A549 (cell line): ENCODE measurements at regions of chr20 and their contacts with region 1.

Region 1: DNA sequence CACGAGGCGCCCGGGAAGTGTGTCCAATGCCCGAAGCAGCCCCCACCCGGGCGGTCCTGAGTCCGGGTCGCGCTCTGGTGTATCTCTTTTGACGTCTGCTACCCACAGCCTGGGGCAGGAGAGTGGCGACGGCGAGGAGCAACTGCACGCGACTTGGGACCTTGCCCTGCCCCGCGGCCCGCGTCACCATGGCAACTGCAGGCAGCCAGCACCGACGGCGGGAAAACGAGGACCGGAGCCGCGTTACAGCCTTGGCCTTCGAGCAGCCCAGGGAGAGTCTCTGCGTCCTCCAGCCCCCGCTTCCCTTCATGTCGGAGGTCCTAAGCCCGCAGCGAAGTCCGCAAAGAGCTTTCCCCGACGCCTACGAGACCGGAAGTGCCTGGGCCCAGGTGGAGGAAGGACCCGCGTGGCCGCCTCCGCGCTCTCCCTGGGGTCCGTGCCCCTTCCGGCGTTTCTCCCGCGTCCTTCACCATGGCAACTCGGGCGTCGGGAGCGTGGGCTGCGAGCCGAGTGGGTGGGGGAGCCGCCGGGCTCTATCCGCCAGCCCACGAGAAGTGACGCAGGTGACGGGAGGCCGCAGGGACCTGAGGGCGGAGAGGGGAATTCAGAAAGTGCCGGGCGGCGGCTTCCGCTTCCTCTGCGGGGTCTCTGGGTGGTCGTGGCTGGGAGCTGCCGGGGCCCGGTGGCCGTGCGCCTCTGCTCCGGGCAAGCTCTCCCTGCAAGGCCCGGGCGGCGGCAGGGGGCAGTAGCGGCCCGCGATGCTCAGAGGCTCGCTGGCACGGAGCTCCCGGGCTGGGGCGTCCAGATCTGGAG is 88.6 kb upstream of the TGM3 start:
- DNase-seq: peak; percentile 73 to 90
- ATAC-seq: peak; percentile 96 to 99
- H3K4me3 ChIP-seq: peak overlapping the region; percentile 57
- H3K27ac ChIP-seq: peak overlapping the region; percentile 63 to 85
- H3K4me1 ChIP-seq: no peaks in the 10 kb centered on the region
- CTCF ChIP-seq: peak; percentile 86
- EP300 ChIP-seq: no peak
- POLR2A ChIP-seq: no peak
- RAD21 ChIP-seq: peak; percentile 83 to 95

Region 2: GRCh38 chr20:2221921-2222320 is 14.8 kb after region 1 on chr20:
- CTCF ChIA-PET with region 1: interaction called, 11 read pairs
- POLR2A ChIA-PET with region 1: no interaction called
- DNase-seq: no peak
- ATAC-seq: no peak
- H3K4me3 ChIP-seq: no peak overlapping the region
- H3K27ac ChIP-seq: no peak overlapping the region
- H3K4me1 ChIP-seq: no peaks in the 10 kb centered on the region
- CTCF ChIP-seq: no peak
- EP300 ChIP-seq: no peak
- POLR2A ChIP-seq: no peak
- RAD21 ChIP-seq: no peak

Region 3: DNA sequence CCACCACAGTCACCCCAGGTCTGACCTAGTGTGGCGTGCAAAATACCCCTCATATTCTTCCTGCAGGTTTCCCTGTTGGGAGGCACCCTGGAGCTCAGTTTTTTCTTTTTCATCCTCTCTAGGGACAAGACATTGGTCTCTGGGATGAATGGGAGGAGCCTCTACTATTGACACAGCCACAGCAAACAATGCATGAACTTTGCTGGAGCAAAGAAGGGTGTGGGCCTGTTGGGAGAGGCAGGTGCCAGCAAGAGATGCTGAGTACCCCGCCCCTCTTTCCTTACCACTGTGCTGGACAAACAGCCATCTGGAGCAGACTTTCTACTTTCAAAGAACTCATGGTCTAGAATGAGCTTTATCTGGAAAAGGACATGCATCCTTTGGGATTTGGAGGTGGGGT is 98.8 kb after region 1 on chr20:
- CTCF ChIA-PET with region 1: interaction called, 14 read pairs
- POLR2A ChIA-PET with region 1: no interaction called
- DNase-seq: peak in 1 of 2 experiments; percentile 69
- ATAC-seq: peak; percentile 61 to 76; a peak in 5 of 6 replicates
- H3K4me3 ChIP-seq: no peak overlapping the region
- H3K27ac ChIP-seq: peak overlapping the region; percentile 23 to 49; a peak in 4 of 6 replicates
- H3K4me1 ChIP-seq: peaks cover 49% of the 10 kb centered on the region
- CTCF ChIP-seq: no peak
- EP300 ChIP-seq: no peak
- POLR2A ChIP-seq: no peak
- RAD21 ChIP-seq: no peak

Region 4: DNA sequence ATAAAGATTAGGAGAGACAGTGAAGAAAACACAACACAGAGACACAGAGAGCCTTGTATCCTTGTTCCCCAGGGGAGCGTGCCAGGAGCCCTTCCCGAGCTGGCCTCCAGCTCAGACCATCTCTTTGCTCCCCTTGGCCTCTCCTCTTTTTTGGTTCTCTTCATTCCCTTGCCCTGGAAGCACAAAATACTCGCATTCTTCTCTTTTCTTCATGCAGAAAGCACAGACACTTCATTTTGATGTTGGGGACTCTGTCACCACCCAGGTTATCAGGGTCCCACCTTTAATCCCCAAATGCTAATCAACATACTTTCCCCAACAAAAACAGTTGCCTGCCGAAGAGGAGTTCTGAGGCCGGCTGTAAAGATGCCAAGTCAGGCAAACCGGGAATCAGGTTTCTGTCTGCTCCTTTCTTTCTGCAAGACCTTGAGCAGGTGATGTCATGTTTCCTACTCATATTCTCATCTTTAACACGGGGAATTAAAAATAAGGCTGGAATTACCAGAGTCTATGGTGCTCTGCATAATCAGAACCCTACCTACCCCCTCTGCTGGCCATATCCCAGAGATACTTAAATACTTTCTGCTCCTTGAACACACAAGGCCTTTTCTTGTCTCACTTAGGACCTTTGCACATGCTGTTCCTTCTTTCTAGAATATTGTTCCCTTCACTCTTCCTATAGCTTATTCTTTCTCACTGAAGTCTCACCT is 195.3 kb after region 1 on chr20:
- CTCF ChIA-PET with region 1: interaction called, 76 read pairs
- POLR2A ChIA-PET with region 1: no interaction called
- DNase-seq: peak; percentile 54 to 58
- ATAC-seq: peak; percentile 63 to 79; a peak in 5 of 6 replicates
- H3K4me3 ChIP-seq: no peak overlapping the region
- H3K27ac ChIP-seq: no peak overlapping the region
- H3K4me1 ChIP-seq: no peaks in the 10 kb centered on the region
- CTCF ChIP-seq: peak; percentile 54
- EP300 ChIP-seq: no peak
- POLR2A ChIP-seq: no peak
- RAD21 ChIP-seq: peak; percentile 33 to 53; a peak in 3 of 5 replicates

Region 5: DNA sequence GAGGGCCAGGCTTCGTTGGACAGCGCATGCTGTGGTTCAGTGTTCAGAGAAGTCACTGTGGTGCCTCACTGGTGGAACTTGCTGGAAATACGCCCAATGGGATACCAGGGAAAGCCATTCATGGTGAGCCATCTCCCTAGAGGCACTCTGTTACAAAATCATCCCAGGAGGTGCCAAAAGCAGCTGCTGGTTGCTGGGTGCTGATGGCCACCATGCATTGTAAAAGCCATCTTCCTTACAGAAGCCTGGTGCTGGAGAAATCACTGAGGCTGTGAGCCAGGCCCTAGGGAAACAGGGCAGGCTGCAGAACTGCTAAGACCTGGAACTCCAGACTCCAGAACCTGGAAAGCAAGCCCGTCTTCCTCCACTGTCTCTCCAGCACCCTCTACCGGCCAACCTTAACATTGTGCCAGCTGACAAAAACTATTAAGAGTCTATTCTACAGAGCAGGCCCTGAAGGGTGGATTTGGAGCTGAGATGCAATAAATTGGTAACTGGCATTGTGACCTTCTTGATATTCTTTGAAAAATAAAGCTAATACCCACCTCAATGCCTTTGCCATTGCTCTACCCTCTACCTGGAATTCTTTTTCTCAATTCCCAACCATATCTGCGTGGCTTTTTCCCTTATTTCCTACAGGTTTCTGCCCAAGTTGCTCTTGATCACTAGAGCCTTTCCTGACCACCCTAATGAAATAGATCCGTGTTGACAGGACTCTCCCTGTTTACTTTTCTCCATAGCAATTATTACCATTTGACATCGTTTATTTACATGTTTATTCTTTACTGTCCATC is 245.0 kb after region 1 on chr20:
- CTCF ChIA-PET with region 1: interaction called, 117 read pairs
- POLR2A ChIA-PET with region 1: no interaction called
- DNase-seq: peak; percentile 81 to 82
- ATAC-seq: peak; percentile 74 to 88
- H3K4me3 ChIP-seq: no peak overlapping the region
- H3K27ac ChIP-seq: no peak overlapping the region
- H3K4me1 ChIP-seq: no peaks in the 10 kb centered on the region
- CTCF ChIP-seq: peak; percentile 85
- EP300 ChIP-seq: no peak
- POLR2A ChIP-seq: no peak
- RAD21 ChIP-seq: peak; percentile 75 to 88